Uterus (tissue), 4 donors: ENCODE measurements at regions of chr10 and their contacts with region 1.

Region 1: DNA sequence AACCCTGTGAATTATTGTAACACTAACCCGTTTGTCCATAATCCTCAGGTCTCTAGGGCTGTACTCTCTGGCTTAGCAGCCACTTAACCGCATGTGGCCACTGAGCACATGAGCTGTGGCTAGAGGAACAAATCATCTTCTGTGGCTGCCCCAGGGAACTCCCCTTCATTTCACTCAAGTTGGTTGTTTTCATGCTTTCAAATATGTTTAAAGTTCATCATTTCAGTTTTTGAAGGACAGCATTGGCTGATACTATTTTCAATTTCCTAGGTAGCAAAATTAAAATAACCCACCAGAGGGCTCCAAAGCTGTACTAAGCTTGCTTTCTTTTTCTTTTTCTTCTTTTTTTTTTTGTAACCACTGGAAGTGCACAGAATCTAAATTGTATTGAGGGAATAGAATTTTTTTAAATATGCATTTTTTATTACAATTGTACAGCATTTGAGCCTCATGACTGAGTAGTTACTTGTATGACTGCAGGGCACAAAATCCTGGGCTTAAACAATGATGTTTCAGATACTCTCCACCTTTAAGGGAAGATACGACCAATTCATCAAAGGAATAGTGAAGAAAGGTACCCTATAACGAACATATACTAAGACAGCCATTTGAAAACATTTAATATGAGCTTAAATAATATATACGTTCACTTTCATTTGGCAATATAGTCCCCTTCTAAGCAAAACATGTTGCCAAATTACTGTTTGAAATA is 38.6 kb downstream of the MRC1 start:
- DNase-seq: no peak
- H3K4me3 ChIP-seq: no peak overlapping the region
- H3K27ac ChIP-seq: no peak overlapping the region
- H3K4me1 ChIP-seq: no peaks in the 10 kb centered on the region
- H3K27me3 ChIP-seq: no peaks in the 10 kb centered on the region
- CTCF ChIP-seq: peak; percentile 23 to 47 (median 30)
- POLR2A ChIP-seq: no peak

Region 2: GRCh38 chr10:17787078-17787961 is 60.4 kb before region 1 on chr10:
- intact Hi-C with region 1: no loop called
- DNase-seq: no peak
- H3K4me3 ChIP-seq: no peak overlapping the region
- H3K27ac ChIP-seq: no peak overlapping the region
- H3K4me1 ChIP-seq: no peaks in the 10 kb centered on the region
- H3K27me3 ChIP-seq: no peaks in the 10 kb centered on the region
- CTCF ChIP-seq: no peak
- POLR2A ChIP-seq: no peak

Region 3: DNA sequence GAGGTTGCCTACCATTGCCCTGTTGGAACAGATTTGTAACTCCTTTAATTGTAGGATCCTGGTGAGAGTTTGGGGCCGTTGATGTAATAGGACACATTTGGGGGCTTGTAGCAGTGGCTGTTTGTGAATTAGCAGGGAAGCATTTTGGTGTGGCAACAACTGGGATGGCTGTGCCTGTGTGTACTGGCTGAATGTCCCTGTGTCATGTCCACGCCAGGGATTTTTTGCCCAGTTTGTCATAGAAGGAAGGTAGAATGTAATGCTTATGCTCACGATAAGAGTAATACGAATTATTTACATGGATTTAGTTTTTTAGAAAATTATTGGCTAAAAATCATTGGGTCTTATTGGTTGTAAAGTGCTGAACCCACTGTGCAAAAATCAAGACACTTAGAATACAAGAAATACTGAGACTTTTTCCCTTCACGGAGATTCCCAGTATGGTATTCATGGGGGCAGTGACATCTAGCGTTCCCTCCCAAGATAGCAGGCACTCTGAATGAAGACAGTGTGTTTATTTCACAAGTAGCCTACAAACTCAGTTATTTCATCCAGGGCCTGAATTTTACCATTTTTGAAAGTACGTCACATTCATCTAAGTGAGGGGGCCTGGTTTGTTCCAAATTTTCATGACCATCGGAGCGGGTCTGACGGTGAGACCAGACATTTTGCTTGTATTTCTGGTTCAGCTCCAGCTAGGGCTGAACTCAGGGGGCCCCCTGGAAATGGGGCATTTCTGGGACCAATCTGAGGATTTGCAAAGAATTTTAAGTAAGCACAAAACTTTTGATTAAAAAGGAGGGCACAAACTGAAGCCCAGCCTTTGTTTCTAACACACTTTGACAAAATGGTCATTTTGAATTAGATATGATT is 367.2 kb after region 1 on chr10:
- intact Hi-C with region 1: loop called (anchors 10 kb)
- DNase-seq: peak; percentile 57 to 64
- H3K4me3 ChIP-seq: no peak overlapping the region
- H3K27ac ChIP-seq: peak overlapping the region in 1 of 2 donors; percentile 66
- H3K4me1 ChIP-seq: no peaks in the 10 kb centered on the region
- H3K27me3 ChIP-seq: no peaks in the 10 kb centered on the region
- CTCF ChIP-seq: peak; percentile 75 to 82 (median 80)
- POLR2A ChIP-seq: no peak